Esophagus muscularis mucosa (tissue), 4 donors: ENCODE measurements at regions of chr11 and their contacts with region 1.

Region 1: GRCh38 chr11:34051349-34052035 is at the start of gene CAPRIN1:
- DNase-seq: peak; percentile 93
- H3K4me3 ChIP-seq: peak within 1 kb of the TSS; percentile 69 to 98 (median 82)
- H3K27ac ChIP-seq: peak within 1 kb of the TSS; percentile 94 to 99 (median 97)
- H3K4me1 ChIP-seq: peaks cover 35 to 40% (median 39%) of the 10 kb centered on the region in 4 donors
- H3K27me3 ChIP-seq: no peaks in the 10 kb centered on the region
- CTCF ChIP-seq: no peak
- EP300 ChIP-seq: no peak
- POLR2A ChIP-seq: peak; percentile 62
- total RNA-seq, gene CAPRIN1: 99.9 to 152 (median 103) TPM

Region 2: GRCh38 chr11:33976495-33977199 is 74.8 kb before region 1 on chr11:
- intact Hi-C with region 1: no loop called
- DNase-seq: no peak
- H3K4me3 ChIP-seq: no peak overlapping the region
- H3K27ac ChIP-seq: no peak overlapping the region
- H3K4me1 ChIP-seq: no peaks in the 10 kb centered on the region
- H3K27me3 ChIP-seq: no peaks in the 10 kb centered on the region
- CTCF ChIP-seq: no peak
- EP300 ChIP-seq: no peak
- POLR2A ChIP-seq: no peak

Region 3: DNA sequence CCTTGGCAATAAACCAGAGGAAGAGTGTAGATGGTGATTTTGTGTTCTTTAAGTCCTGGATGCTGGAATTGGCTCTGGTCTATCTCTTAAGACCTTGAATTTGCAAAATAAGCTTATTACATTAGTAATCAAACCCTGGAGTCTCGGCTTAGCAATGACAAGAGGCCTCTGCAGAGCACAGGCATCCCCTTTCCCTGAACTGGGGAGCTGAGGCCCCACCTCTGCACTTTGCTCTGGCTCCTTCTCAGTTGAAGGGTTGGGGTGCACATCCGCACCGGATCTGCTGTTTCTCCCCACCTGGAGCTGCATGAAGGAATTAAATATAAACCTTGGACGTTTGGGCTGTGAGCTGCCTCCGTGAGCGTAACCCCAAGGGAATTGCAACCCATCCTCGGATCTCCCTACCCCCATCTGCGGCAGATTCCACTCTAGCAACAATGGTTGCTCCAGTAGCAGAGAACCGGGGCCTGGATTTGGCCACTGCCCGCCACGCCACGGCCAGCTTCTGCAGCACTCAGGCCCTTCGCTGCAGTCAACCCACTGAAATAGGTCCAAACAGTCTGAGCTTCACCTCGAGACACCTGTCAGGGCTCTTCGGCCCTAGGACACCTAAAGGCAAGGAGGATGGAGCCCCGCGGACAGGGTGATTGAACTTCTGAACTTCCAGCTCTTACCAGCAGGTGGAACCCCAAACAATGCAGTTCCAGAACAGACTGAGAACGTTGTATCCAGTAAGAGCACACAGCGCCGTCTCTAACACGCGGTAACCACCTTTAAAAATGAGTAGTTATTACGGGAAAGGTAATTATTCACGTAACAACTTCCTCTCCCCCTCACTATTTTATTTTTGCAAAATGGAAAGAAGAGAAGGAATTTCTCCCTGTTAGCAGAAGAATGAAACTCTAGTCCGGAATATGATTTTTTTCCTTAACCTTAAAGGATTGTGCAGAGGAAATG is 54.7 kb before region 1 on chr11:
- intact Hi-C with region 1: loop called (anchors 5 kb)
- DNase-seq: no peak
- H3K4me3 ChIP-seq: peak overlapping the region in 2 of 4 donors; percentile 12 to 31
- H3K27ac ChIP-seq: no peak overlapping the region
- H3K4me1 ChIP-seq: peaks cover 5 to 15% (median 11%) of the 10 kb centered on the region in 4 donors
- H3K27me3 ChIP-seq: peaks cover 0 to 6% (median 0%) of the 10 kb centered on the region in 4 donors
- CTCF ChIP-seq: peak; percentile 75 to 88 (median 76)
- EP300 ChIP-seq: no peak
- POLR2A ChIP-seq: no peak

Region 4: GRCh38 chr11:34105079-34105956 is 53.8 kb after region 1 on chr11 and contains the start of gene NAT10:
- intact Hi-C with region 1: loop called (anchors 2 kb)
- DNase-seq: peak; percentile 99
- H3K4me3 ChIP-seq: peak within 1 kb of the TSS; percentile 66 to 95 (median 74)
- H3K27ac ChIP-seq: peak within 1 kb of the TSS; percentile 89 to 92 (median 90)
- H3K4me1 ChIP-seq: peaks cover 19 to 31% (median 26%) of the 10 kb centered on the region in 4 donors
- H3K27me3 ChIP-seq: no peaks in the 10 kb centered on the region
- CTCF ChIP-seq: peak in 2 of 3 experiments; percentile 18 to 31
- EP300 ChIP-seq: peak; percentile 11
- POLR2A ChIP-seq: peak; percentile 18
- total RNA-seq, gene NAT10: 19.9 to 27.2 (median 20.6) TPM

Region 5: GRCh38 chr11:34357701-34358257 is 306.3 kb after region 1 on chr11 and contains the start of gene ABTB2:
- intact Hi-C with region 1: loop called (anchors 5 kb)
- DNase-seq: peak; percentile 99
- H3K4me3 ChIP-seq: peak within 1 kb of the TSS; percentile 64 to 79 (median 68)
- H3K27ac ChIP-seq: peak within 1 kb of the TSS; percentile 84 to 90 (median 86)
- H3K4me1 ChIP-seq: peaks cover 27 to 46% (median 39%) of the 10 kb centered on the region in 4 donors
- H3K27me3 ChIP-seq: peaks cover 0 to 3% (median 0%) of the 10 kb centered on the region in 4 donors
- CTCF ChIP-seq: no peak
- EP300 ChIP-seq: no peak
- POLR2A ChIP-seq: peak; percentile 76
- total RNA-seq, gene ABTB2: 5.0 to 8.0 (median 7.2) TPM

Region 6: GRCh38 chr11:34537656-34538055 is 486.2 kb after region 1 on chr11:
- intact Hi-C with region 1: no loop called
- DNase-seq: no peak
- H3K4me3 ChIP-seq: no peak overlapping the region
- H3K27ac ChIP-seq: no peak overlapping the region
- H3K4me1 ChIP-seq: no peaks in the 10 kb centered on the region
- H3K27me3 ChIP-seq: peaks cover 0 to 27% (median 0%) of the 10 kb centered on the region in 4 donors
- CTCF ChIP-seq: no peak
- EP300 ChIP-seq: no peak
- POLR2A ChIP-seq: no peak